ENCODE measurements at regions of chr14 and their contacts with region 1.

Region 1: GRCh38 chr14:80055667-80056496 is 155.4 kb downstream of the DIO2 start:
- DNase-seq: peak; percentile 47 to 60
- H3K4me3 ChIP-seq: no peak overlapping the region
- H3K4me3 Mint-ChIP-seq: no peak overlapping the region
- H3K27ac Mint-ChIP-seq: no peak overlapping the region
- H3K4me1 ChIP-seq: no peaks in the 10 kb centered on the region
- H3K4me1 Mint-ChIP-seq: peaks cover 6% of the 10 kb centered on the region
- H3K27me3 ChIP-seq: no peaks in the 10 kb centered on the region
- H3K27me3 Mint-ChIP-seq: no peaks in the 10 kb centered on the region
- CTCF ChIP-seq: peak; percentile 85 to 88

Region 2: DNA sequence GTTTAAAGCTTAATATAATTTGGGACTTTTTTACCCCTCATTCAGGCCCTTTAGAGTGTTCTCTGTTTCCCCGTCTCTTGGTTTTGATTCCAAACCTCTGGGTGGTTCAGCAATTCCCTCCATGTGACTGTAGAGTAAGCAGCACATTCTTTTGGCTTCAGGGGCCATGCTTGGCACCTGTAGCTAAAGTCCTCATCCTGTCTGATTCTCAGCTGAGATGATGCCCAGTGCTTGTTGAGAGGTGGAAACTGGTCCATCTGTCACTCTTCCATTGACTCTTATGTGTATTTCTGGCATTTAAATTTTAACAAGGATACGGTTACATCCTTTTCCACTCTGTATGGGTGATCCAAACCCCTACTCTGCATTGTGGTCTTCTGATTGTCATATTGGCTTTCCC is 28.3 kb after region 1 on chr14:
- CTCF ChIA-PET with region 1: no interaction called
- POLR2A ChIA-PET with region 1: no interaction called
- intact Hi-C with region 1: no loop called
- DNase-seq: no peak
- H3K4me3 ChIP-seq: no peak overlapping the region
- H3K4me3 Mint-ChIP-seq: no peak overlapping the region
- H3K27ac Mint-ChIP-seq: no peak overlapping the region
- H3K4me1 ChIP-seq: no peaks in the 10 kb centered on the region
- H3K4me1 Mint-ChIP-seq: no peaks in the 10 kb centered on the region
- H3K27me3 ChIP-seq: no peaks in the 10 kb centered on the region
- H3K27me3 Mint-ChIP-seq: no peaks in the 10 kb centered on the region
- CTCF ChIP-seq: no peak

Region 3: DNA sequence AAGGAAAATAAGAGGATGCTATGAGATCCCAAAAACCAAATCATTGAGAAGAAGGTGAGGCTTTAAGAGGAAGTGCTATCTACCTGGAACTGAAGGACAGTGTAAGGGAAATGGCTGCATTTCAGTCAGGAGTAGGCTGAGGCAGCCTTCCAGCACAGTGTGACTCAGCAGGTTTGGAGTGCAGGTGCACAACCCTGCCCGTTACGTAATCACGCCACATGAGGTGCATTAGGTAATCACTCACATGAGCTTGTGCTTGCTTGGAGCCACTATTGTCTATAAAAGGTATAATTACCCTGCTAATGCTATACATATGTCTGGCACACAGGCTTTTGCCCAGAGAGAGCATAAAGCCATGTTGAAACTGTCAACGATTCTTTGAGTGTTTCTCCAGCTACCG is 80.5 kb after region 1 on chr14:
- CTCF ChIA-PET with region 1: no interaction called
- POLR2A ChIA-PET with region 1: no interaction called
- intact Hi-C with region 1: no loop called
- DNase-seq: peak in 1 of 2 experiments; percentile 24
- H3K4me3 ChIP-seq: no peak overlapping the region
- H3K4me3 Mint-ChIP-seq: no peak overlapping the region
- H3K27ac Mint-ChIP-seq: no peak overlapping the region
- H3K4me1 ChIP-seq: no peaks in the 10 kb centered on the region
- H3K4me1 Mint-ChIP-seq: no peaks in the 10 kb centered on the region
- H3K27me3 ChIP-seq: no peaks in the 10 kb centered on the region; the same call in 1 of the 2 replicates
- H3K27me3 Mint-ChIP-seq: peaks cover 3% of the 10 kb centered on the region
- CTCF ChIP-seq: no peak

Region 4: DNA sequence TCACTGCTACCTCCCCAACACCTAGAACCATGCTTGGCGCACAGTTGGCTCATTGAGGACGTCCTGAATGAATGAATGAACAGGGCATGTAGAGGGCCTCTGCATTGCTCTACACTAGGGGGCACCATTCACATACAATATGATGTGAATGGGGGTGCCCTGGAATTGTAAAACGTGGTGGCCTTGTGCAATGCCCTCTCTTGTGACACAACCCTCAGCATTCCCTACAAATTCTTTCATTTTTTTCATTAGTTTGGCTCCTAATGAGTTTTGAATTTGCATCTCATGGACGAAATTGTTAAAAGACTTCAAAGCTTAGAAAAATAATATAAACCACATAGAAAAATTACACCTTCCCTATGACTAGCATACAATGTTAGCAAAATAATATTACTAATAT is 157.7 kb after region 1 on chr14:
- CTCF ChIA-PET with region 1: no interaction called
- POLR2A ChIA-PET with region 1: no interaction called
- intact Hi-C with region 1: loop called (anchors 1 kb)
- DNase-seq: peak; percentile 68 to 72
- H3K4me3 ChIP-seq: no peak overlapping the region
- H3K4me3 Mint-ChIP-seq: no peak overlapping the region
- H3K27ac Mint-ChIP-seq: no peak overlapping the region
- H3K4me1 ChIP-seq: peaks cover 21% of the 10 kb centered on the region
- H3K4me1 Mint-ChIP-seq: peaks cover 7% of the 10 kb centered on the region
- H3K27me3 ChIP-seq: no peaks in the 10 kb centered on the region
- H3K27me3 Mint-ChIP-seq: peaks cover 3% of the 10 kb centered on the region
- CTCF ChIP-seq: peak; percentile 45 to 52

Region 5: GRCh38 chr14:80364274-80364673 is 308.4 kb after region 1 on chr14:
- CTCF ChIA-PET with region 1: no interaction called
- POLR2A ChIA-PET with region 1: no interaction called
- intact Hi-C with region 1: loop called (anchors 1 kb)
- DNase-seq: peak in 1 of 2 experiments; percentile 4
- H3K4me3 ChIP-seq: no peak overlapping the region
- H3K4me3 Mint-ChIP-seq: no peak overlapping the region
- H3K27ac Mint-ChIP-seq: no peak overlapping the region
- H3K4me1 ChIP-seq: peaks cover 12% of the 10 kb centered on the region
- H3K4me1 Mint-ChIP-seq: peaks cover 7% of the 10 kb centered on the region
- H3K27me3 ChIP-seq: no peaks in the 10 kb centered on the region
- H3K27me3 Mint-ChIP-seq: no peaks in the 10 kb centered on the region
- CTCF ChIP-seq: peak in 1 of 2 experiments; percentile 11

Region 6: DNA sequence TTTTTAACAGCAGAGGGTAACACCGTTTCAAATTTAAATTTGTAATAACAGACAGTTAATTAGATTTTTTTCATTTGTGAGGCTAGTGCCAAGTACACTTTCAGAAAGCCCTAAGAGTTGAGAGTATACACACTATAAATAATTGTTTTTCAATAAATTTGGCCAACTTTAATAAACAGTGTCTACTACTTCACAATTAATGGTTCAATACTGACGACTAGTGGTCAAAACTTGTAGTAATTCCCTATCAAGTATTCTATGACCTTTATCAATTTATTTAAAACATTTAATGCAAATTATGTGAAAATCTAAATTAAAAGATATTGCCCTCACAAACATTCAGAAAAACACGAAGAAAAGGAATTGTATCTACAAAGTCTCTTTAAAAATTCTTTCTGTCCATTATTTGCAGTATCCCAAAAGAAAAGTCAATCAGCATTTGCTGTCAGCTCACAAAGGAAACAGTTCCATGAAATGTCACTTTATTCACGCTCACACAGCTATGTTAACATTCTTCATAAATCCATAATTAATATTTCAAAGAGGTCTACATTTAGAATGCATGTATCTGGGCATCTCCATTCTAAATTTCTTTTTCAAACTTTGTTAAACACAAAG is 794.4 kb after region 1 on chr14:
- CTCF ChIA-PET with region 1: no interaction called
- POLR2A ChIA-PET with region 1: no interaction called
- intact Hi-C with region 1: loop called (anchors 1 kb)
- DNase-seq: peak in 1 of 2 experiments; percentile 16
- H3K4me3 ChIP-seq: no peak overlapping the region
- H3K4me3 Mint-ChIP-seq: no peak overlapping the region
- H3K27ac Mint-ChIP-seq: no peak overlapping the region
- H3K4me1 ChIP-seq: no peaks in the 10 kb centered on the region
- H3K4me1 Mint-ChIP-seq: peaks cover 5% of the 10 kb centered on the region
- H3K27me3 ChIP-seq: no peaks in the 10 kb centered on the region
- H3K27me3 Mint-ChIP-seq: no peaks in the 10 kb centered on the region
- CTCF ChIP-seq: peak; percentile 24 to 54